Naive thymus-derived CD4-positive, alpha-beta T cell (primary cell): ENCODE measurements at regions of chr2 and their contacts with region 1.

Region 1: DNA sequence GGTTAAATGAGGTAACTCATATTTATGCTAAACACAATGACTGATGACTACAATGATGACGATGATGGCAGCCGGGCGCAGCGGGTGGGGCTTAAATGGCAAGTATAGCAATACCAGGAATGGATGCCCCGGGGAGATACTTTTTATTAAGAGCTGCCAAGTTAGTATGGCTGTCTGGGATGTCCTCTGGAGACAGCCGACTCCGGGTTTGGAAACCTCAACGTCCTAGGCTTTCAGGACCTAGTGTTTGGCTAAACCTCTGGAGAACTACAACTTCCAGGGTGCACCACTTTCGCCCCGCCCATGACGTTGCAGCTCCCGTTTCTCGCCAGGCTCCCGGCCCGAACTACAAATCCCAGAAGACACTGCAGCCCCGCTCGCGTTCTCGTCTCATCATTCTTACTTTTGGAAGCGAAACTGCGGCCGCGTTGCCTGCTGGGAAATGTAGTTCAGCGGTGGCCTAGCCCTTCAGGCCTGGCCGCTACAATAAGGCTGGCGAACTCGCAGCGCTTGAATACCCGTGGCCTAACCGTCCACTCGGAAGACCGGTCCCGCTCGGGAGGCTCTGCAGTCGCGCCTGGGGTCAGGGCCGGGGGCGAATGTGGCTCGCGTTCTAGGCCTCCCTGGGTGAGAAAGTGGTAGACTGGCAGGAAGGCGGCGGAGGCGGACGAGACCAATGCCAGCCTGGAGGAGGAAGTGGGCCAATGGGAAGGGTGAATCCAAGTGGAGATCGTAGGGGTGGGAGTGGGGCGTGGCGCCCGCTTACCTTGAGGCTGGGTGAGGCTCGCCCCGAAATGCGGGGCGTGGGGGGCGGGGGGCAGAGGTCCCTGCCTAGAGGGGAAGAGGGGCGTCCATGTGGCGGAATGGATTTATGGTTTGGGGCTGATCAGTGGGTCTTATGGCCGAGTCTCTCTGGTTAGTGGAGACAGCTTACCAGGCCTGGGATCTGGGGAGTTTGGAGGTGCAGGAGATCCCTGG is at the start of gene SMARCAL1:
- DNase-seq: peak; percentile 93 to 98 (median 97)
- ATAC-seq: peak; percentile 97
- H3K4me3 ChIP-seq: peak within 1 kb of the TSS; percentile 89
- H3K4me3 Mint-ChIP-seq: peak within 1 kb of the TSS; percentile 85 to 99 (median 98)
- H3K27ac ChIP-seq: peak within 1 kb of the TSS; percentile 83
- H3K27ac Mint-ChIP-seq: peak within 1 kb of the TSS; percentile 86 to 97 (median 94)
- H3K4me1 ChIP-seq: peaks cover 0 to 7% of the 10 kb centered on the region in 2 donors
- H3K4me1 Mint-ChIP-seq: peaks cover 6 to 28% (median 23%) of the 10 kb centered on the region in 7 donors
- H3K27me3 ChIP-seq: no peaks in the 10 kb centered on the region
- H3K27me3 Mint-ChIP-seq: peaks cover 0 to 14% (median 3%) of the 10 kb centered on the region in 5 donors
- total RNA-seq, gene SMARCAL1: 16.2 to 30.3 (median 24.6) TPM

Region 2: DNA sequence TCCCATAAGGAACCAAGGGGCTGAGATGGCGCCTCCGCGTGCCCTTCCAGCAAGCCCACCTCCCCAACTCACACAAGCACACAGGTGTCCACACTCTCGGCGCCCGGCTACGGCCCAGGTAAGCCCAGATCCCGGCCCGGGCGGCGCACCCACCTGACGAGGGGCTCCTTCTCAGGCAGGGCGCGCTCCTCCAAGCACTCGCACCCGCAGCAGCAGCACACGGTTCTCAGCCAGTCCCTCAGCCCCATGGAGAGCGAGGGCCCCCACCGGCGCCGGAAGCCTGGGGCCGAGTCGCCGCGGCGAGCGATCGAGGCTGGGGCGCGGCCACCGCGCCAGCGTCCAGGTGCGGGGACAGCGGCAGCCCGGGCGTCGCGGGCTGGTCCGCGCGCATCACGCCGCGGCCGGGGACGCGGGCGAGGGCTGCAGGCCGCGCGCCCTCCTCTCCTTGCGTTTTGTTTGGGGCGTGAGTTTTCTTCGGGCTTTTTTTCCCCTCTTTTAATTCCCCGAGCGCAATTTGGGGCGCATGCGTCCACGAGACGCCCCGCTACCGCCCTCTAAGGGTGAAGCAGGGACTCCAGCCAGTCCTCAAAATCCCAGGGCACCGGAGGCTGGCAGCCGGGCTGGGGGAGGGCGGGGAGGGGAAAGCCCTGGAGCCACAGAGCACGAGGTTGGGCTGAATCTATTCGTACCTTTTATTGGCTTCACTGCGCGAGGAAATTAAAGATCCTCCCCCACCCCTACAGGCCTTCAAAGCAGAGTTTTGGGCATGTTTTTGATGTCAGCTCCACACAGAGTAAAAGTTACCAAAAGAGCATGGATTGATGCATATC is 399.0 kb before region 1 on chr2 and contains the start of gene MREG:
- CTCF ChIA-PET with region 1: no interaction called
- POLR2A ChIA-PET with region 1: interaction called, 3 read pairs
- intact Hi-C with region 1: loop called (anchors 1 to 5 kb)
- DNase-seq: peak; percentile 67 to 84 (median 80)
- ATAC-seq: peak; percentile 90
- H3K4me3 ChIP-seq: peak within 1 kb of the TSS; percentile 65
- H3K4me3 Mint-ChIP-seq: peak within 1 kb of the TSS; percentile 82 to 93 (median 89)
- H3K27ac ChIP-seq: peak within 1 kb of the TSS; percentile 59
- H3K27ac Mint-ChIP-seq: peak within 1 kb of the TSS; percentile 33 to 91 (median 74)
- H3K4me1 ChIP-seq: peaks cover 30 to 31% of the 10 kb centered on the region in 2 donors
- H3K4me1 Mint-ChIP-seq: peaks cover 27 to 70% (median 53%) of the 10 kb centered on the region in 7 donors
- H3K27me3 ChIP-seq: no peaks in the 10 kb centered on the region
- H3K27me3 Mint-ChIP-seq: peaks cover 0 to 4% (median 0%) of the 10 kb centered on the region in 5 donors
- total RNA-seq, gene MREG: 4.8 to 8.5 (median 6.4) TPM

Region 3: DNA sequence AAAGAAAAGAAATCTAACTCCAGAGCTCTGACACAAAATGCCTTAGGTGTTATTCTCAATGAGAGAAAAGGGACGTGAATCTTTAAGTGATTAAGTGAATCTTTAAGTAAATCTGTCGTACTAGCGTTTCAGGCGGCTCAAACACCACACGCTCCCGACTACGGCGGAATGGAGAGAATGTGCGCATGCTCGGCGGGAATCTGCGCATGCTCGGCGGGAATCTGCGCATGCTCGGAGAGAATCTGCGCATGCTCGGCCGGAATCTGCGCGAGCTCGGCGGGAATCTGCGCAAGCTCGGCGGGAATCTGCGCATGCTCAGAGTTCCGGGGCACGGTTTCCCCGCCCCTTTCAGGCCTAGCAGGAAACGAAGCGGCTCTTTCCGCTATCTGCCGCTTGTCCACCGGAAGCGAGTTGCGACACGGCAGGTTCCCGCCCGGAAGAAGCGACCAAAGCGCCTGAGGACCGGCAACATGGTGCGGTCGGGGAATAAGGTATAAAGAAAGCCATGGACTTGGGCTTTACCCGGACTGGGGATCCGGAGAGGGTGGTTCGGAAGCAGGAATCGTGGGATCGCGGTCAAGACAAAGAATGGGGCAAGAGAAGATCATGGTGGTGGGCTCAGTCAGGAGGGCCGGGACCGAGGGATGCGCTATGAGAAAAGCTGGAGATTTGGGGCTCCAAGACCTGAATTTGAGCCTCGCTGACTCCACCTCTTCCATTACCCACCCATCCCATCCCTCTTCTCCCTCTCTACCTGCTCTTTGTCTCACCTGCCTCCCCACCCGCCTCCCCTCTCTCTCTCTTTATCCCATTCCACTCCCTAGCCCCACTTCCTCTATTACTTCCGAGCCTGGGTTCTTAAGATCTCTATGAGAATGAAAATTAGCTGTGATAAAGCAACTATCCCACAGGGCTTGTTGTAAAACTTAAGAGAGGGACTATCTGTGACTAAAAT is 303.1 kb before region 1 on chr2 and contains the start of gene XRCC5:
- CTCF ChIA-PET with region 1: no interaction called
- POLR2A ChIA-PET with region 1: interaction called, 6 read pairs
- intact Hi-C with region 1: loop called (anchors 1 kb)
- DNase-seq: peak; percentile 95 to 97 (median 97)
- ATAC-seq: peak; percentile 93
- H3K4me3 ChIP-seq: peak within 1 kb of the TSS; percentile 96
- H3K4me3 Mint-ChIP-seq: peak within 1 kb of the TSS; percentile 96 to 100 (median 100)
- H3K27ac ChIP-seq: peak within 1 kb of the TSS; percentile 95
- H3K27ac Mint-ChIP-seq: peak within 1 kb of the TSS; percentile 97 to 100 (median 100)
- H3K4me1 ChIP-seq: peaks cover 24 to 30% of the 10 kb centered on the region in 2 donors
- H3K4me1 Mint-ChIP-seq: peaks cover 20 to 57% (median 52%) of the 10 kb centered on the region in 7 donors
- H3K27me3 ChIP-seq: no peaks in the 10 kb centered on the region
- H3K27me3 Mint-ChIP-seq: peaks cover 0 to 4% (median 0%) of the 10 kb centered on the region in 5 donors
- total RNA-seq, gene XRCC5: 168 to 347 (median 228) TPM

Region 4: DNA sequence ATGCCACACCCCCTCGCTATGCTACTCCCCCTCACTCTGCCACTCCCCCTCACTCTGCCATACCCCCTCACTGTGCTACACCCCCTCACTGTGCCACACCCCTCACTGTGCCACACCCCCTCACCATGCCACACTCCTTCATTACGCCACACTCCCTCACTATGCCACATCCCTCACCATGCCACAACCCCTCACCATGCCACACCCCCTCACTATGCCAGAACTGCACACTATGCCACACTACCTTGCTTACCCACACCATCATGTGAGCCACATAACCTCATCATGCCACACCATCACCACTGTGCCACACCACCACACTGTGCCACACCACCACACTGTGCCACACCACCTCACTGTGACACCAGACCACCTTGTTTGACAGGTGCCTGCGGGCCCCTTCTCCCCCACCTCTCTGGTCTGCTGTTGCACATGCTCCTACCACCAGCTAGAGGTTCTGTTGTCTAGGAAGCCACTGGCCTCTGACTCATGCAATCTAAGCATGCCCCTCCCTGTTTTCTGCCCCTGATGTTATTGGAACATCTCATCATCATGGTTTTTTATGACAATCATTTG is 62.0 kb before region 1 on chr2:
- CTCF ChIA-PET with region 1: no interaction called
- POLR2A ChIA-PET with region 1: no interaction called
- intact Hi-C with region 1: loop called in 1 of 2 experiments (anchors 2 kb)
- DNase-seq: no peak
- ATAC-seq: peak; percentile 63
- H3K4me3 ChIP-seq: no peak overlapping the region
- H3K4me3 Mint-ChIP-seq: peak overlapping the region in 9 of 10 donors; percentile 14 to 55 (median 38)
- H3K27ac ChIP-seq: no peak overlapping the region
- H3K27ac Mint-ChIP-seq: peak overlapping the region; percentile 22 to 90 (median 76)
- H3K4me1 ChIP-seq: peaks cover 71 to 72% of the 10 kb centered on the region in 2 donors
- H3K4me1 Mint-ChIP-seq: peaks cover 67 to 93% (median 85%) of the 10 kb centered on the region in 7 donors
- H3K27me3 ChIP-seq: no peaks in the 10 kb centered on the region
- H3K27me3 Mint-ChIP-seq: no peaks in the 10 kb centered on the region

Region 5: GRCh38 chr2:216445501-216445900 is 33.2 kb after region 1 on chr2:
- CTCF ChIA-PET with region 1: no interaction called
- POLR2A ChIA-PET with region 1: no interaction called
- intact Hi-C with region 1: no loop called
- DNase-seq: no peak
- ATAC-seq: no peak
- H3K4me3 ChIP-seq: no peak overlapping the region
- H3K4me3 Mint-ChIP-seq: no peak overlapping the region
- H3K27ac ChIP-seq: no peak overlapping the region
- H3K27ac Mint-ChIP-seq: no peak overlapping the region
- H3K4me1 ChIP-seq: no peaks in the 10 kb centered on the region
- H3K4me1 Mint-ChIP-seq: no peaks in the 10 kb centered on the region
- H3K27me3 ChIP-seq: no peaks in the 10 kb centered on the region
- H3K27me3 Mint-ChIP-seq: no peaks in the 10 kb centered on the region

Region 6: GRCh38 chr2:216498418-216499413 is 86.4 kb after region 1 on chr2 and contains the start of gene RPL37A:
- CTCF ChIA-PET with region 1: no interaction called
- POLR2A ChIA-PET with region 1: interaction called, 13 read pairs
- intact Hi-C with region 1: loop called (anchors 1 kb)
- DNase-seq: peak; percentile 81 to 91 (median 87)
- ATAC-seq: peak; percentile 98
- H3K4me3 ChIP-seq: peak within 1 kb of the TSS; percentile 95
- H3K4me3 Mint-ChIP-seq: peak within 1 kb of the TSS; percentile 94 to 100 (median 98)
- H3K27ac ChIP-seq: peak within 1 kb of the TSS; percentile 89
- H3K27ac Mint-ChIP-seq: peak within 1 kb of the TSS; percentile 92 to 98 (median 93)
- H3K4me1 ChIP-seq: peaks cover 19 to 24% of the 10 kb centered on the region in 2 donors
- H3K4me1 Mint-ChIP-seq: peaks cover 22 to 61% (median 50%) of the 10 kb centered on the region in 7 donors
- H3K27me3 ChIP-seq: no peaks in the 10 kb centered on the region
- H3K27me3 Mint-ChIP-seq: peaks cover 0 to 3% (median 0%) of the 10 kb centered on the region in 5 donors
- total RNA-seq, gene RPL37A: 2,173 to 3,712 (median 3,236) TPM